ENCODE measurements at regions of chr2 and their contacts with region 1.

Region 1: DNA sequence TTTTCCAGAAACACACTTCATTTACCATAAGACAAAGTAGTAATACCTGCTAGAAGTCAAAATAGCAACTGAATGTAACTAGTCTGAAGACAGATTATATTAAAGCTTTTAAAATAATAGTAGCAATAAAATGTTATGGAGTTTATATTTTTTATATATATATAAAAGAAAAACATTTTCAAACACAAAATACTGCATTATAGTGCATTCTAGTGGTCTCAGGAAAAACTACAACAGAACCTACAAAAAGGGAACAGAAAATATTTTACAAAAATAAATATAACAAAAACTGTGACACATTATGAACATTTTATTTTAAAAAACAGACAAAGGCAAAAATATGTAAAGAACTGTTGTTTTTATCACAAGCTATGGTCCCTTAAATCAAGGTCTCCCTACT is 48.0 kb downstream of the STRN start:
- DNase-seq: no peak
- H3K4me3 Mint-ChIP-seq: no peak overlapping the region
- H3K27ac Mint-ChIP-seq: no peak overlapping the region
- H3K4me1 Mint-ChIP-seq: peaks cover 18% of the 10 kb centered on the region
- H3K27me3 Mint-ChIP-seq: no peaks in the 10 kb centered on the region

Region 2: DNA sequence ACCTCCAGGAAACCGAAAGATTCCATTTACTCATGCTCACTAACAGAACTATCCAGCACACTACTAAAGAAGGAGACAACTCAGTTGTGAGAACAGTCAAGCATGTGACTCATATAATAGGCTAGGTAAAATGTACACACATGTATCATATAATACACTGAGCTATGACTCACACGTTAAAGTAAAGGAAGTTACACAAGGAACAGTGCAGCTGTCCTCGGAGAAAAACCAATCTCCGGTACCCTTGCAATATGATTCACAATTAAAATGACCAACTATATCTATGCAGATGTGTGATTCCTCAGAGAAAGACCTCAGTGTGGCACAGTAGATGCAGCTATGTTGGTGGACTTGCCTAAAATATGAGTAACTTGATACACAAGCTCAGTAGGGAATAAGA is 28.5 kb before region 1 on chr2:
- intact Hi-C with region 1: loop called (anchors 5 kb)
- DNase-seq: no peak
- H3K4me3 Mint-ChIP-seq: no peak overlapping the region
- H3K27ac Mint-ChIP-seq: peak overlapping the region; percentile 55
- H3K4me1 Mint-ChIP-seq: peaks cover 5% of the 10 kb centered on the region
- H3K27me3 Mint-ChIP-seq: no peaks in the 10 kb centered on the region

Region 3: GRCh38 chr2:36951574-36951973 is 33.3 kb after region 1 on chr2:
- intact Hi-C with region 1: no loop called
- DNase-seq: no peak
- H3K4me3 Mint-ChIP-seq: no peak overlapping the region
- H3K27ac Mint-ChIP-seq: no peak overlapping the region
- H3K4me1 Mint-ChIP-seq: peaks cover 15% of the 10 kb centered on the region
- H3K27me3 Mint-ChIP-seq: no peaks in the 10 kb centered on the region

Region 4: DNA sequence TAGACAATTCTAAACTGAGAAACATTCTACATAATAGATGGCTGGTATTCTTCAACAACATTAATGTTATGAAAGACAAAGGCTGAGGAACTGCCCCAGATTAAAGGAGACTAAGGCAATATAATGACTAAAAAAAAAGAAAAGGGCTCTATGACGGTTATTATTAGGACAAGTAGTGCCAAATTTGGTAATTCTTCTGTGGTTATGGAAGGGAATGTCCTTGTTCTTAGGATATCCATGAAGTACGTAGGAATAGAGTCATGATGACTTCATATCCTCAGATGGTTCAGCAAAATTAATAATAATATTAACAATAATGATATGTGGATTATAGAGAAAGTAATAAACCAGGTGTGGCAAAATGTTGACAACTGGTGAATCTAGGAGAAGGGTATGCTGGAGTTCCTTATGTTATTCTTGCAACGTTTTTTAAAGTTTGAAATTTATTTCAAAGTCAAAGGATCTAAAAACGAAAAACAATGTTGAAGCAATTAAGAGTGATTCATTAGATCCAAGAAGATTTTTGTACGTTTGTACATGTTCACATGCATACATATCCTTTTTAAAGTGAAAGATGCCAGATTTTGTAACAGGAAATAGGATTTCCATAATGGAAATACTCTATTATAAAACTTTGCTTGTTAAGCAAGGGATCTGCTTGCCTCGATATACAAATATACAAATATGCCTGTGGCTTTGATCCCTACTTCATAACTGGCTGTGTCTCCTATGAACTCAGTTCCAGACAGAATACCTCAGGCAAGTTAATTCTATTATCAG is 75.7 kb after region 1 on chr2:
- intact Hi-C with region 1: no loop called
- DNase-seq: no peak
- H3K4me3 Mint-ChIP-seq: no peak overlapping the region
- H3K27ac Mint-ChIP-seq: no peak overlapping the region
- H3K4me1 Mint-ChIP-seq: no peaks in the 10 kb centered on the region
- H3K27me3 Mint-ChIP-seq: no peaks in the 10 kb centered on the region